H1 (cell line): ENCODE measurements at regions of chr15 and their contacts with region 1.

Region 1: GRCh38 chr15:78108299-78109084 is 16.1 kb downstream of the SH2D7 start:
- DNase-seq: peak; percentile 49 to 83
- H3K4me3 ChIP-seq: no peak overlapping the region
- H3K27ac ChIP-seq: no peak overlapping the region
- H3K4me1 ChIP-seq: peaks cover 0 to 2% (median 0%) of the 10 kb centered on the region in 4 experiments; a peak in 1 of 7 replicates
- H3K27me3 ChIP-seq: no peaks in the 10 kb centered on the region
- CTCF ChIP-seq: peak; percentile 81 to 98 (median 81)
- EP300 ChIP-seq: no peak
- POLR2A ChIP-seq: no peak
- RAD21 ChIP-seq: peak; percentile 84 to 86

Region 2: DNA sequence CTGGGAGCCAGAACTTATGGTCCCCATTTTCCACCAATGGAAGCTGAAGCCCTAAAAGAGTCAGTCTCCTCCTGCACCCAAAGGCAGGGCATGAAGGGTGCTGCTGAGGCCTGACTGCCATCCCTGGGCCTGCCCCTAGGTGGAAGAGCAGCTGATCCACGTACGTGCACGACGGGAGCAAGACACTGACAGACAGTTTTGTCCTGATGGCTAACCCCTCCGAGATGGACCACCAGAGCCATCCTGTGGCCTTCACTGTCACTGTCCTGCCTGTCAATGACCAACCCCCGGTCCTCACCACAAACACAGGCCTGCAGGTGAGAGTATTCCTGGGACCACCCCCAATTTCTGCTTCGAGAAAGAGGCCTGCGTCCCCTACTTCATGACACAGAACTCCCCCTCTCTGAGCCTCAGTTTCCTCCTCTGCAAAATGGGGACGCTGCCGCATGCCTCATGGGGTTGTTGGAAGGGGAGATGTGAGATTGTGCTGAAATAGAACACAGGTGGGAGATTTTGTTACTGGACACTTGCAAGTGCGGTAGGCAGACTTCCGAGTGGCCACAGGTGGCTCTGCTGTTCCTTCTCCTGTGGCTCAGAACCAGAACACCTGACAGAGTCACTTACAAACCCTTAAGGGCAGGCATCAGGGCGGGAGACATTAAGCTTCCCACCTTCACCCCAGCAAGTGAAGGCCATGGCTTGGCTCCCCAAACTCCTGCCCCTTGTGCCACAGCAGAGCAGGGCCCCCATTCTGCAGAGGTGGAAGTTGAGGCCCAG is 206.3 kb before region 1 on chr15:
- CTCF ChIA-PET with region 1: interaction called, 10 read pairs
- POLR2A ChIA-PET with region 1: no interaction called
- DNase-seq: no peak
- H3K4me3 ChIP-seq: no peak overlapping the region
- H3K27ac ChIP-seq: no peak overlapping the region
- H3K4me1 ChIP-seq: peaks cover 0 to 2% (median 0%) of the 10 kb centered on the region in 4 experiments; a peak in 2 of 7 replicates
- H3K27me3 ChIP-seq: no peaks in the 10 kb centered on the region
- CTCF ChIP-seq: peak; percentile 32 to 60 (median 49)
- EP300 ChIP-seq: no peak
- POLR2A ChIP-seq: no peak
- RAD21 ChIP-seq: no peak

Region 3: GRCh38 chr15:78000091-78000926 is 108.2 kb before region 1 on chr15:
- CTCF ChIA-PET with region 1: interaction called, 226 read pairs
- POLR2A ChIA-PET with region 1: interaction called, 3 read pairs
- DNase-seq: peak; percentile 85 to 96
- H3K4me3 ChIP-seq: no peak overlapping the region
- H3K27ac ChIP-seq: no peak overlapping the region
- H3K4me1 ChIP-seq: peaks cover 0 to 4% (median 0%) of the 10 kb centered on the region in 4 experiments; a peak in 2 of 7 replicates
- H3K27me3 ChIP-seq: no peaks in the 10 kb centered on the region
- CTCF ChIP-seq: peak; percentile 89 to 98 (median 93)
- EP300 ChIP-seq: peak in 1 of 2 experiments; percentile 46; a peak in 1 of 3 replicates
- POLR2A ChIP-seq: no peak
- RAD21 ChIP-seq: peak; percentile 97 to 98

Region 4: GRCh38 chr15:78093242-78094020 is 15.1 kb before region 1 on chr15:
- CTCF ChIA-PET with region 1: interaction called, 51 read pairs
- POLR2A ChIA-PET with region 1: interaction called, 3 read pairs
- DNase-seq: no peak
- H3K4me3 ChIP-seq: no peak overlapping the region
- H3K27ac ChIP-seq: no peak overlapping the region
- H3K4me1 ChIP-seq: 0 out of 7 replicates have a peak, but pooled peaks cover 0 to 3% (median 0%) of the 10 kb centered on the region in 4 experiments
- H3K27me3 ChIP-seq: peaks cover 0 to 14% (median 7%) of the 10 kb centered on the region in 4 experiments; a peak in 3 of 7 replicates
- CTCF ChIP-seq: no peak
- EP300 ChIP-seq: no peak
- POLR2A ChIP-seq: no peak
- RAD21 ChIP-seq: no peak

Region 5: GRCh38 chr15:78177447-78177873 is 69.0 kb after region 1 on chr15:
- CTCF ChIA-PET with region 1: interaction called, 60 read pairs
- POLR2A ChIA-PET with region 1: no interaction called
- DNase-seq: peak; percentile 36 to 88
- H3K4me3 ChIP-seq: no peak overlapping the region
- H3K27ac ChIP-seq: no peak overlapping the region
- H3K4me1 ChIP-seq: no peaks in the 10 kb centered on the region
- H3K27me3 ChIP-seq: no peaks in the 10 kb centered on the region
- CTCF ChIP-seq: peak; percentile 91 to 96 (median 91)
- EP300 ChIP-seq: no peak
- POLR2A ChIP-seq: no peak
- RAD21 ChIP-seq: peak; percentile 94 to 96

Region 6: GRCh38 chr15:78241007-78241406 is 132.5 kb after region 1 on chr15:
- CTCF ChIA-PET with region 1: interaction called, 123 read pairs
- POLR2A ChIA-PET with region 1: no interaction called
- DNase-seq: peak; percentile 66 to 97
- H3K4me3 ChIP-seq: no peak overlapping the region
- H3K27ac ChIP-seq: no peak overlapping the region
- H3K4me1 ChIP-seq: peaks cover 0 to 8% (median 5%) of the 10 kb centered on the region in 4 experiments; a peak in 6 of 7 replicates
- H3K27me3 ChIP-seq: no peaks in the 10 kb centered on the region
- CTCF ChIP-seq: peak; percentile 81 to 93 (median 86)
- EP300 ChIP-seq: no peak
- POLR2A ChIP-seq: no peak
- RAD21 ChIP-seq: peak; percentile 87 to 90

Region 7: DNA sequence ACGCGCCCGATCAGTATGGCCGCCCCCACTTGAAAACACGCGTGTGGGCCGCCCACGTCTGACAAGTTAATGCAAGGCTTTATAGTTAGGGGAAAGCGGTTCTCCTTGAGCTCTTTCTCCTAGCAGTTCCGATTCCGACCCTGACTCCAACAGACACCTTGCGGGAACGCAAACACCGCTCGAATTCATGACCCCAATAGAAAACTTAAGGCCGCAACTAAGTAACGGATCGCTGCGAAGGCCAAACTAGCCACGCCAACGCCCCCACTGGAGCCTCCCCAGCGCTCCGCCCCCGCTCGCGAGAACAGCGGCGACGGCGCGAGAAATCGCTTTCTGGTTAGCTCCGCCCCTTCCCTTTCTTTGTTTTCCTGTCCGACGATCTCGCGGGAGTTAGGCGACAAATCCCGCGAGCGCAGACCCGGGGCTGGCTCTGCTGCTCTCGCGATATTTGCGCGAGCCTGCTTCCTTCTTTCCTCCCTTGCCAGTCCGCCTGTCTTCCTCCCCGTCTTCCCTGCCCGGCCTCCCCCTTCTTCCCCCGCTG is 329.3 kb after region 1 on chr15 and contains the start of gene IREB2:
- CTCF ChIA-PET with region 1: no interaction called
- POLR2A ChIA-PET with region 1: no interaction called
- DNase-seq: peak; percentile 97 to 99
- H3K4me3 ChIP-seq: peak within 1 kb of the TSS; percentile 77 to 94 (median 88)
- H3K27ac ChIP-seq: peak within 1 kb of the TSS; percentile 92
- H3K4me1 ChIP-seq: no peaks in the 10 kb centered on the region
- H3K27me3 ChIP-seq: no peaks in the 10 kb centered on the region
- CTCF ChIP-seq: no peak
- EP300 ChIP-seq: no peak
- POLR2A ChIP-seq: peak; percentile 59 to 73; a peak in 2 of 3 replicates
- RAD21 ChIP-seq: no peak
- total RNA-seq, gene IREB2: 99.7 and 103 TPM in 2 replicates

Region 8: DNA sequence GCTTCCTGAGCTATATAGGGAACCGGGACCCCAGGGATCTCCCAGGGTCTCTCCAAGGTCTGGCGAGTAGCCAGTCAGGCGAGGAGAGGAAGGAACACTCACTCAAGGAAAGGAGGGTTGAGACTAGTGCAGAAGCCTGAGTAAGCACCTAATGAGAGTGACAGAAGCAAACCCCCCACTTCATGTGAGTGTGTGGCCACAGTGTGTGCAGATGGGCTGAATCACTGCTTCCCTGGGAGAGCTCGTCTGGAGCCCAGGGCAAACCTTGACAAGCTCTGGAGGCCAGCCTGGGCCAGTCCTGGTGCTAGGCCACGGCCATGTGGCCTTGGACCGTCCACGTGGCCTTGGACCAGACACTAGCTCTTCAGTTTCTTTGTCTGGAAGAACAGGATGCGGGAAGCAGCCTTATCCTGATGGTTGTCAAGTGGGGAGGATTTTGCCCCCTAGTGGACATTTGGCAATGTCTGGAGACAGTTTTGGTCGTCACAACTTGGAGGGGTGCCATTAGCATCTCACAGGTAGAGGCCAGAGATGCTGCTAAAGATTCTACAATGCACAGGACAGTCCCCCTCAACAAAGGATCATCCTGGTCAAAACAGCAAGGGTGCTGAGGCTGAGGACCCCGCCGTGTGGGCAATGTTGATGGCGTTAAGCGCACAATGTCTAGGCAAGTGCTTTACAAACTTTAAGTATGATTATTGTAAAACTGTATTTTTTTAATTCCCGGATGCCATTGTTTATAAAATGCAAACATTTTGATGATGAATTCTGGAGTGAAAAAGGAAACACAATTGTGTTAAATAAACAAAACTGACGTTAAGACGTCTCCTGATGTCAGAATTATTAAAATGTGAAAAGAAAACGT is 871.2 kb after region 1 on chr15:
- CTCF ChIA-PET with region 1: no interaction called
- POLR2A ChIA-PET with region 1: no interaction called
- DNase-seq: peak; percentile 69 to 79
- H3K4me3 ChIP-seq: no peak overlapping the region
- H3K27ac ChIP-seq: no peak overlapping the region
- H3K4me1 ChIP-seq: no peaks in the 10 kb centered on the region; a peak in 2 of 7 replicates
- H3K27me3 ChIP-seq: peaks cover 0 to 13% (median 8%) of the 10 kb centered on the region in 4 experiments; a peak in 3 of 7 replicates
- CTCF ChIP-seq: peak; percentile 75 to 92 (median 82)
- EP300 ChIP-seq: no peak
- POLR2A ChIP-seq: no peak
- RAD21 ChIP-seq: peak; percentile 77 to 87